ENCODE measurements at regions of chr3 and their contacts with region 1.

Region 1: DNA sequence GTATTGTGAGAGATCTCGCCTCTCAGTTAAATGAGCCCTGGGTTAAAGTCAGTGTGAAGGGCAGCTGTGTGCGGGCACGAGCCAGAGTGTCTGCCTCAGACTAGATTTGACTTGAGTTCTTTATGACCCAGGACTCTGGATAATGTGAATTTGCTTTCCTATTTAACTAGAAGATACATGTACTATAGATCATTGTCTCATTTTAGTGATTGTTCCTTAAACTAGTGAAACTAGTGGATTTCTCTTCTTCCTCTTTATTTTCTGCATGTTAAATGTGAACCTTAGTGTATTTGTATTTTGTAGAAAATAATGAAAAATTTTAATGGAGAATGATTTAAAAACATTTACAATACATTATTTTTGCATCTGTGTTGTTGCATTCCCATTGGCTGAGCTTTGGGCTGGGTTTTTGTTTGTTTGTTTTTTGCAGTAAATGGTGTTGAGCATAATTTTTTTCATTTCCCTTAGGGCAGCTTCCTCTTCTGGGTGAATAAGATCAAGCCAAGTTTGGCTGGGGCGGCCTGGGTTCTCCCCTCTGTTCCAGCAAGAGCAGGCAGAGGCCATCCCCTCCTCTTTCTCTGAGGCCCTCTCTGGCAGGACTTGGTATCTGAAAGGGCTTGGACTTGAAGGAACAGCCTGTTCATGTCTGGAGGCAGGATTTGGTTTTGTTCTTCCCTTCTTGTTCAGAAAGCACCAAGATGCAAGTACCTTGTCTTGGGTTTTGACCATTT is 15.0 kb downstream of the GCSAM start:
- DNase-seq: no peak
- ATAC-seq: peak; percentile 48
- H3K4me3 ChIP-seq: peak overlapping the region; percentile 48; the same call in 1 of the 2 replicates
- H3K27ac ChIP-seq: peak overlapping the region; percentile 95
- H3K4me1 ChIP-seq: peaks cover 92% of the 10 kb centered on the region
- H3K27me3 ChIP-seq: no peaks in the 10 kb centered on the region
- CTCF ChIP-seq: peak; percentile 32 to 34 (median 33); a peak in 5 of 6 replicates
- EP300 ChIP-seq: no peak
- POLR2A ChIP-seq: peak; percentile 47; the same call in 1 of the 2 replicates
- RAD21 ChIP-seq: peak; percentile 43

Region 2: GRCh38 chr3:112128843-112129727 is 11.1 kb after region 1 on chr3:
- CTCF ChIA-PET with region 1: interaction called, 226 read pairs
- POLR2A ChIA-PET with region 1: interaction called, 345 read pairs
- RAD21 ChIA-PET with region 1: interaction called, 457 read pairs
- SMC1A ChIA-PET with region 1: interaction called, 489 read pairs
- in situ Hi-C with region 1: no loop called
- intact Hi-C with region 1: loop called (anchors 1 kb)
- DNase-seq: no peak
- ATAC-seq: peak; percentile 60
- H3K4me3 ChIP-seq: peak overlapping the region; percentile 78
- H3K27ac ChIP-seq: peak overlapping the region; percentile 99
- H3K4me1 ChIP-seq: peaks cover 46% of the 10 kb centered on the region
- H3K27me3 ChIP-seq: no peaks in the 10 kb centered on the region
- CTCF ChIP-seq: no peak
- EP300 ChIP-seq: peak in 1 of 2 experiments; percentile 59; a peak in 2 of 4 replicates
- POLR2A ChIP-seq: peak; percentile 66; the same call in 1 of the 2 replicates
- RAD21 ChIP-seq: no peak

Region 3: GRCh38 chr3:112456147-112456546 is 338.1 kb after region 1 on chr3:
- CTCF ChIA-PET with region 1: interaction called, 6 read pairs
- POLR2A ChIA-PET with region 1: interaction called, 5 read pairs
- RAD21 ChIA-PET with region 1: interaction called, 14 read pairs
- SMC1A ChIA-PET with region 1: interaction called, 5 read pairs
- in situ Hi-C with region 1: loop called (anchors 5 kb)
- intact Hi-C with region 1: loop called (anchors 2 kb)
- DNase-seq: no peak
- ATAC-seq: peak; percentile 46
- H3K4me3 ChIP-seq: no peak overlapping the region
- H3K27ac ChIP-seq: peak overlapping the region; percentile 61
- H3K4me1 ChIP-seq: peaks cover 17% of the 10 kb centered on the region
- H3K27me3 ChIP-seq: no peaks in the 10 kb centered on the region
- CTCF ChIP-seq: no peak
- EP300 ChIP-seq: peak; percentile 59 to 68; a peak in 1 of 4 replicates
- POLR2A ChIP-seq: no peak
- RAD21 ChIP-seq: peak; percentile 21; the same call in 1 of the 2 replicates

Measured in GM12878 (cell line).